ENCODE measurements at regions of chr1 and their contacts with region 1.

Region 1: GRCh38 chr1:55277377-55278130 is 62.4 kb upstream of the USP24 start:
- DNase-seq: peak; percentile 76 to 88 (median 81)
- ATAC-seq: peak; percentile 74 to 92 (median 92)
- H3K4me3 ChIP-seq: no peak overlapping the region
- H3K27ac ChIP-seq: peak overlapping the region in 2 of 12 donors; percentile 12 to 61
- H3K4me1 ChIP-seq: peaks cover 0 to 24% (median 9%) of the 10 kb centered on the region in 12 donors
- H3K27me3 ChIP-seq: no peaks in the 10 kb centered on the region
- CTCF ChIP-seq: peak; percentile 70 to 91 (median 82)
- POLR2A ChIP-seq: no peak

Region 2: GRCh38 chr1:55071477-55071876 is 206.1 kb before region 1 on chr1:
- intact Hi-C with region 1: no loop called
- DNase-seq: no peak
- ATAC-seq: peak in 3 of 4 donors; percentile 32 to 66 (median 48)
- H3K4me3 ChIP-seq: no peak overlapping the region
- H3K27ac ChIP-seq: peak overlapping the region in 5 of 12 donors; percentile 6 to 44 (median 8)
- H3K4me1 ChIP-seq: peaks cover 0 to 26% (median 7%) of the 10 kb centered on the region in 12 donors
- H3K27me3 ChIP-seq: no peaks in the 10 kb centered on the region
- CTCF ChIP-seq: peak in 6 of 12 donors; percentile 12 to 43 (median 28)
- POLR2A ChIP-seq: no peak

Region 3: DNA sequence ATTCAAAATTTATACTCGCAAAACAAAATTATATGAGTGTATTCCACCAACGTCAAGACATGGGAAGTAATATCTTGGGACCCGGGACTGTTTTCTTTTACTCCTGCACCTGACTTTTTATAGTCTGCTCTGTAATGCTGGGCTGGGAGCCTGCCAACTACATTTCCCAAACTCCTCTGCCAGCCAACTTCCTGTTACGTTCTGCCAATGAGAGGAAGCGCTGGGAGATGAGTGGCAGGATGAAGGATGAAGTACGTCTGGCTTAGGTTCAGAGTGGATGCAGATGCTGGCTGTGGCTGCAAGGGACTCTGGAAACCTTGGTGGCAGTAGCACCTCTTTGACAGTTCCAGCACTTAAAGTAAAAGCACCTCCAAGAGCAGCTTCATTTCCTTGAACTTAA is 122.0 kb before region 1 on chr1:
- intact Hi-C with region 1: loop called in 2 of 10 experiments (anchors 5 kb)
- DNase-seq: peak; percentile 60 to 81 (median 71)
- ATAC-seq: peak; percentile 75 to 94 (median 91)
- H3K4me3 ChIP-seq: no peak overlapping the region
- H3K27ac ChIP-seq: no peak overlapping the region
- H3K4me1 ChIP-seq: peaks cover 0 to 24% (median 0%) of the 10 kb centered on the region in 12 donors
- H3K27me3 ChIP-seq: no peaks in the 10 kb centered on the region
- CTCF ChIP-seq: no peak
- POLR2A ChIP-seq: no peak